CD4-positive, alpha-beta memory T cell (primary cell): ENCODE measurements at regions of chr11 and their contacts with region 1.

Region 1: GRCh38 chr11:95641495-95641894 is 148.1 kb downstream of the FAM76B start:
- DNase-seq: peak; percentile 42 to 57 (median 50)
- H3K4me3 ChIP-seq: no peak overlapping the region
- H3K4me3 Mint-ChIP-seq: peak overlapping the region in 7 of 8 donors; percentile 37 to 72 (median 65)
- H3K27ac ChIP-seq: peak overlapping the region; percentile 11
- H3K27ac Mint-ChIP-seq: peak overlapping the region; percentile 65 to 94 (median 88)
- H3K4me1 ChIP-seq: peaks cover 17% of the 10 kb centered on the region
- H3K4me1 Mint-ChIP-seq: peaks cover 9 to 21% (median 15%) of the 10 kb centered on the region in 4 donors
- H3K27me3 ChIP-seq: no peaks in the 10 kb centered on the region
- H3K27me3 Mint-ChIP-seq: no peaks in the 10 kb centered on the region

Region 2: DNA sequence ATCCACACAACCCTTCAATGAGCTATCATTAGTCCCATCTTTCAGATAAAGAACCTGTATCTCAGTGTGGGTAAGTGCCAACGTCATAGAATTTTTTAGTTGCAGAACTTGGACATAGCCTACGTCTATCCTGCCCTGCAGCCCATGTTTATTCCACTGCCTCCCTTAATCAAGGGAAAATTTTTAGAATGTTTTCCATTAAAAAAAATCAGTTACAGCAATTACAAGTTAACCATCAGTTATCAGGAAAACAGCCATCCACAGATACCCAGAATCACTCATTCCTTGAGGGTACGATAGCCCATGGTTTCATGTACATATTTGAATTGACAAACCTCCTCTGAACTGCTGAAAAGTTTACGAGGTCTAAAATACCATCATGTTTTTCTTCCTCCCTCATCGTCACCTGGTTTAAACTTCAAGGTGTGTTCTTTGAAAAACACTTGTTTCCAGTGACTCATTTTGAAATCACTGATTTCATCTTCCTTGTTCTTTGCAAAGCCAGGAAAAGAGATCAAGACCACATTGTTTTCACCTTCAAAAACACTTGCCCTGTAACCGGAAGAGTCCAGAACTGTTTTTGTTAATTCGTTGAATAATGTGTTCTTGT is 47.2 kb after region 1 on chr11:
- CTCF ChIA-PET with region 1: interaction called, 3 read pairs
- POLR2A ChIA-PET with region 1: interaction called, 5 read pairs
- intact Hi-C with region 1: loop called (anchors 2 kb)
- DNase-seq: peak; percentile 65 to 69 (median 66)
- H3K4me3 ChIP-seq: peak overlapping the region in 1 of 2 donors; percentile 16
- H3K4me3 Mint-ChIP-seq: peak overlapping the region in 1 of 8 donors; percentile 1
- H3K27ac ChIP-seq: peak overlapping the region; percentile 41
- H3K27ac Mint-ChIP-seq: no peak overlapping the region
- H3K4me1 ChIP-seq: peaks cover 80% of the 10 kb centered on the region
- H3K4me1 Mint-ChIP-seq: peaks cover 16 to 25% (median 23%) of the 10 kb centered on the region in 4 donors
- H3K27me3 ChIP-seq: no peaks in the 10 kb centered on the region
- H3K27me3 Mint-ChIP-seq: no peaks in the 10 kb centered on the region